Naive thymus-derived CD4-positive, alpha-beta T cell (primary cell): ENCODE measurements at regions of chr9 and their contacts with region 1.

Region 1: DNA sequence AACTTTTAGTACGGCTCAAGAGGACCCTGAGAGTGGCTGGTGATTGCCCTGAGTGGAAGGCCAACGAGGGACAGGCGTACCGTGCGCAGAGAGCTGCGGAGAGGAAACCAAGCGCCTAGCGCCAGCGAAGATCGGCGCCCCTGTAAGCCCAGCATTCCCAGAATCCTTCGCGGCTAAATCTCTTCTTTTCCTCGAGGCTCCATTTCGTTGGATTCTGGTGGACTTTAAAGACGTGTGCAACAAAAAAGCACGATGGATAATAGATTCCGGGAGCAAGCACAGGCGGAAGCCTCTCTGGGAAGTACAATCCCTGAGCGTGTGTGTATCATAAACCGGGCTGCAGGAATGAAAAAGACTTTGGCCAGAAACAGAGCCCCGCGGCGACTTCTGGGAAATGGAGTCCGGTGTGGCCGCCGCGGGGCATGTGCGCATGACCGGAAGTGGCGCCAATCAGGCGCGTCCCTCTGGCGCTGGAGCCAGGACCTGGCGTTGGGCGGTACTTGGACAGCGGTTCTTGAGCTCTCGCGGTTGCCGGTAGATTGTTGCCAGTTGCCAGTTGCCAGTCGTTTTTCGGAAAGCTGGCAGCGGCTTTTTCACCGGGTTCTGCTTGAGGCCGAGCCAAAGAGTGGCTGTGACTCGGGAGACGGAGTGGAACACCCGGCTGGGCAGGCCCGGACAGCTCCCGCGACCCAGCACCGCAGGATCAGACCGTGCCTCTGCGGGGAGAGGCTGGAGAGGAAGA is at the start of gene ZNF79:
- DNase-seq: peak; percentile 80 to 96 (median 84)
- ATAC-seq: peak; percentile 94
- H3K4me3 ChIP-seq: peak within 1 kb of the TSS; percentile 96
- H3K4me3 Mint-ChIP-seq: peak within 1 kb of the TSS; percentile 93 to 99 (median 98)
- H3K27ac ChIP-seq: peak within 1 kb of the TSS; percentile 83
- H3K27ac Mint-ChIP-seq: peak within 1 kb of the TSS; percentile 91 to 96 (median 94)
- H3K4me1 ChIP-seq: peaks cover 12 to 27% of the 10 kb centered on the region in 2 donors
- H3K4me1 Mint-ChIP-seq: peaks cover 39 to 54% (median 50%) of the 10 kb centered on the region in 7 donors
- H3K27me3 ChIP-seq: no peaks in the 10 kb centered on the region
- H3K27me3 Mint-ChIP-seq: no peaks in the 10 kb centered on the region
- total RNA-seq, gene ZNF79: 4.8 to 17.8 (median 13.6) TPM

Region 2: GRCh38 chr9:126804696-126805545 is 619.2 kb before region 1 on chr9 and contains the start of gene ZBTB43:
- CTCF ChIA-PET with region 1: no interaction called
- POLR2A ChIA-PET with region 1: no interaction called
- intact Hi-C with region 1: loop called in 1 of 2 experiments (anchors 2 kb)
- DNase-seq: peak; percentile 95 to 98 (median 98)
- ATAC-seq: peak; percentile 90
- H3K4me3 ChIP-seq: peak within 1 kb of the TSS; percentile 72
- H3K4me3 Mint-ChIP-seq: peak within 1 kb of the TSS; percentile 81 to 99 (median 97)
- H3K27ac ChIP-seq: peak within 1 kb of the TSS; percentile 83
- H3K27ac Mint-ChIP-seq: peak within 1 kb of the TSS; percentile 91 to 99 (median 95)
- H3K4me1 ChIP-seq: peaks cover 10 to 17% of the 10 kb centered on the region in 2 donors
- H3K4me1 Mint-ChIP-seq: peaks cover 32 to 50% (median 41%) of the 10 kb centered on the region in 7 donors
- H3K27me3 ChIP-seq: no peaks in the 10 kb centered on the region
- H3K27me3 Mint-ChIP-seq: peaks cover 0 to 3% (median 0%) of the 10 kb centered on the region in 5 donors
- total RNA-seq, gene ZBTB43: 17.8 to 31.4 (median 28.2) TPM

Region 3: DNA sequence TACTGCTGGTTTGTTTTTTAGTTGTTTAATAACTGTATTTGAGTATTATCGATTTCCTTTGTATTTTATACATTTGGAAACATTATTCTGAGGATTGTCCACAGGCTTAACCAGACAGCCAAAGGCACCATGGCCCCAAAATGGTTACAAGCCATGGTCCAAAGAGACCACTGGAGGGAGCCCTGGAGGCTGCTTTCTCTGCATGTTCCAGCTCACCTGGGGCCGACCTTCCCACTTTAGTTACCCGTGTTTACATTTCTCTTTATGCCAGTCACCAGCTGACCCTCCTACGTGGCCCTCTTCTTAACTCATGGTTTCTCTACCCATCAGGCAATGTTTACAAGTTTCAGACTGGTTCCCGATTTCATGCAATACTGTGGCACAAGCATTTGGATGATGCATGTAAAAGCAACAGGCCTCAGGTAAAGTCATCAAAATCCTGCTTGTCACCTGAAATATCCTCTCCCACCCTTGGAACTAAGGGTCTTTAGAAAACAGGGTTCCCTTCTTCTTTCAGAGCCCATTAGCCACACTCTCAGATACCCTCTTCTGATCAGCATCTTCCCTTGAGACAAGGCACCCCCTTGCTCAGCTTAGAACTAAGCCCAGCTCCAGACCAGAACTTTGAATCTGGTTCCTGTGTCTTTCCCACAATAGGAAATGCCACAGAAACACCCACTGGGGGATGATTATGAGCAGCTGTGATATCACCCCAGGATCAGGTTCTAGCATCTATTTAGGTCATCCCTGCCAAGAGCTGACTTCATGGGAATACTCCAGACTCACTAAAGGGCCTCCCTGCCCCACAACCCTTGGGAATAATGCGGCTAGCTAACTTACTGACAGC is 209.5 kb before region 1 on chr9:
- CTCF ChIA-PET with region 1: interaction called, 6 read pairs
- POLR2A ChIA-PET with region 1: no interaction called
- intact Hi-C with region 1: loop called in 1 of 2 experiments (anchors 2 kb)
- DNase-seq: peak in 8 of 9 donors; percentile 37 to 62 (median 48)
- ATAC-seq: peak; percentile 84
- H3K4me3 ChIP-seq: no peak overlapping the region
- H3K4me3 Mint-ChIP-seq: no peak overlapping the region
- H3K27ac ChIP-seq: no peak overlapping the region
- H3K27ac Mint-ChIP-seq: no peak overlapping the region
- H3K4me1 ChIP-seq: no peaks in the 10 kb centered on the region
- H3K4me1 Mint-ChIP-seq: peaks cover 0 to 5% (median 0%) of the 10 kb centered on the region in 7 donors
- H3K27me3 ChIP-seq: no peaks in the 10 kb centered on the region
- H3K27me3 Mint-ChIP-seq: peaks cover 0 to 16% (median 4%) of the 10 kb centered on the region in 5 donors

Region 4: DNA sequence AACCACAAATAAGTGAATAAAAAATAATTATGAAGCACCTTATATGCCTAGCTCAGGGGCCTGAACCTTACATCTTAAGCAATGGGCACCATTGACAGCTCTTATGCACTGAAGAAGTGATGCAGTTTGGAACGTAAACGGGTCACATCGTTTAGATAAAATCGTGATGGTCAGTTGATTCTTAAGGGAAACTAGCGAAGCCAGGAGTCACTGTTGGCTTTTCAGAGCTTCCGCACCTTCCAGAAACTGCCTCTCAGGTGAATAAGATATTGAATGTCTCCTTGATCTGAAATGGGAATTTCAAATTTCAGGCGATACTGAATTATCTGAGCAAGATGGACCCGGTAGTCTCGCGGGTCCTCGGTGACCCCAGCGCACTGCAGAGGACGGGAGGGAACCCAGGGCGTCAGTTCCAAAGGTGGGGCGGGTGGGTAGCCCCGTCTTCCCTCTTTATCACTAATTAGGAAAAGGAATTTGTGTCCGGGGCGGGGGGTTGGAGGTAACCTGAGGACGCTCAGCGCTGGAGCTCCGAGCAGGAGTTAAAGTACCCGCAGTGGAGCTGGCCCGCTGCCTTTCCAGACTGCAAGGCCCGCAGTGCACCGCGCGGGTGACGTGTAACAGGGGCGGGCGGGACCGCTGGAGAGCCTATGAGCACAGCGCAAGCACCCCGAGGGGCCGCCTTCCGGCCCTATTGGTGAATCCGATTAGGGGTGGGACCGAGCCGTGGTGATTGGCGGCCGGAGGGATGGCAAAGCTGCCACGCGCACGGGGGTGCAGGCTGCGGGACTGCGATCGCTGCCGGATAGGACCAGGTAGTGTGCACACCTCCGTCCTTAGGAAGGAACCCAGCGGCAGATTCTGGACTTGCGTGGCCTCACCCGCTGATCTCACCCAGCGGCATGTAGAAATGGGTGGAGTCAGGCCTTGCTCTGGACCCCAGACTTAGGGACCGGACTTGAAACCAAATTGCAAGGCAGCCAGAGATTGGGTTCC is 179.2 kb before region 1 on chr9:
- CTCF ChIA-PET with region 1: no interaction called
- POLR2A ChIA-PET with region 1: no interaction called
- intact Hi-C with region 1: loop called (anchors 1 kb)
- DNase-seq: peak; percentile 84 to 94 (median 91)
- ATAC-seq: peak; percentile 100
- H3K4me3 ChIP-seq: peak overlapping the region; percentile 85
- H3K4me3 Mint-ChIP-seq: peak overlapping the region; percentile 80 to 92 (median 88)
- H3K27ac ChIP-seq: no peak overlapping the region
- H3K27ac Mint-ChIP-seq: peak overlapping the region in 7 of 9 donors; percentile 28 to 80 (median 59)
- H3K4me1 ChIP-seq: peaks cover 0 to 5% of the 10 kb centered on the region in 2 donors
- H3K4me1 Mint-ChIP-seq: peaks cover 4 to 16% (median 8%) of the 10 kb centered on the region in 7 donors
- H3K27me3 ChIP-seq: no peaks in the 10 kb centered on the region
- H3K27me3 Mint-ChIP-seq: peaks cover 0 to 24% (median 4%) of the 10 kb centered on the region in 5 donors

Region 5: GRCh38 chr9:127388037-127388855 is 35.9 kb before region 1 on chr9:
- CTCF ChIA-PET with region 1: no interaction called
- POLR2A ChIA-PET with region 1: interaction called, 6 read pairs
- intact Hi-C with region 1: loop called (anchors 1 kb)
- DNase-seq: peak; percentile 67 to 97 (median 94)
- ATAC-seq: peak; percentile 98
- H3K4me3 ChIP-seq: no peak overlapping the region
- H3K4me3 Mint-ChIP-seq: peak overlapping the region; percentile 16 to 73 (median 55)
- H3K27ac ChIP-seq: no peak overlapping the region
- H3K27ac Mint-ChIP-seq: peak overlapping the region; percentile 19 to 94 (median 82)
- H3K4me1 ChIP-seq: peaks cover 13 to 20% of the 10 kb centered on the region in 2 donors
- H3K4me1 Mint-ChIP-seq: peaks cover 23 to 44% (median 28%) of the 10 kb centered on the region in 7 donors
- H3K27me3 ChIP-seq: peaks cover 6 to 46% of the 10 kb centered on the region in 2 donors
- H3K27me3 Mint-ChIP-seq: peaks cover 65 to 78% (median 72%) of the 10 kb centered on the region in 5 donors

Region 6: GRCh38 chr9:127715394-127716337 is 291.6 kb after region 1 on chr9 and contains the starts of genes PTRH1 and TTC16:
- CTCF ChIA-PET with region 1: no interaction called
- POLR2A ChIA-PET with region 1: no interaction called
- intact Hi-C with region 1: loop called in 1 of 2 experiments (anchors 1 kb)
- DNase-seq: peak; percentile 91 to 98 (median 96)
- ATAC-seq: peak; percentile 96
- H3K4me3 ChIP-seq: peak within 1 kb of the TSS; percentile 85
- H3K4me3 Mint-ChIP-seq: peak within 1 kb of the TSS; percentile 93 to 100 (median 98)
- H3K27ac ChIP-seq: peak within 1 kb of the TSS; percentile 89
- H3K27ac Mint-ChIP-seq: peak within 1 kb of the TSS; percentile 86 to 99 (median 97)
- H3K4me1 ChIP-seq: peaks cover 31 to 32% of the 10 kb centered on the region in 2 donors
- H3K4me1 Mint-ChIP-seq: peaks cover 28 to 47% (median 30%) of the 10 kb centered on the region in 7 donors
- H3K27me3 ChIP-seq: no peaks in the 10 kb centered on the region
- H3K27me3 Mint-ChIP-seq: no peaks in the 10 kb centered on the region
- total RNA-seq, gene PTRH1: 7.8 to 9.5 (median 8.6) TPM
- total RNA-seq, gene TTC16: 0.29 to 9.9 (median 4.6) TPM